H1 (cell line): ENCODE measurements at regions of chr22 and their contacts with region 1.

Region 1: GRCh38 chr22:35568751-35569725 is 28.4 kb downstream of the RASD2 start:
- DNase-seq: no peak
- H3K4me3 ChIP-seq: no peak overlapping the region
- H3K27ac ChIP-seq: no peak overlapping the region
- H3K4me1 ChIP-seq: peaks cover 0 to 3% (median 0%) of the 10 kb centered on the region in 4 experiments; a peak in 1 of 7 replicates
- H3K27me3 ChIP-seq: no peaks in the 10 kb centered on the region
- CTCF ChIP-seq: no peak
- EP300 ChIP-seq: no peak
- POLR2A ChIP-seq: no peak
- RAD21 ChIP-seq: no peak

Region 2: GRCh38 chr22:35552196-35552842 is 16.7 kb before region 1 on chr22:
- CTCF ChIA-PET with region 1: interaction called, 14 read pairs
- POLR2A ChIA-PET with region 1: interaction called, 5 read pairs
- DNase-seq: peak in 1 of 2 experiments; percentile 94
- H3K4me3 ChIP-seq: no peak overlapping the region
- H3K27ac ChIP-seq: no peak overlapping the region
- H3K4me1 ChIP-seq: peaks cover 0 to 23% (median 11%) of the 10 kb centered on the region in 4 experiments; a peak in 6 of 7 replicates
- H3K27me3 ChIP-seq: no peaks in the 10 kb centered on the region; a peak in 1 of 7 replicates
- CTCF ChIP-seq: no peak
- EP300 ChIP-seq: no peak
- POLR2A ChIP-seq: no peak
- RAD21 ChIP-seq: no peak

Region 3: GRCh38 chr22:35894937-35895708 is 326.1 kb after region 1 on chr22:
- CTCF ChIA-PET with region 1: no interaction called
- POLR2A ChIA-PET with region 1: no interaction called
- DNase-seq: no peak
- H3K4me3 ChIP-seq: no peak overlapping the region; a peak in 1 of 8 replicates
- H3K27ac ChIP-seq: no peak overlapping the region
- H3K4me1 ChIP-seq: peaks cover 2 to 25% (median 7%) of the 10 kb centered on the region in 4 experiments; a peak in 4 of 7 replicates
- H3K27me3 ChIP-seq: no peaks in the 10 kb centered on the region
- CTCF ChIP-seq: no peak
- EP300 ChIP-seq: no peak
- POLR2A ChIP-seq: no peak
- RAD21 ChIP-seq: no peak